ENCODE measurements at regions of chr1 and their contacts with region 1.

Region 1: DNA sequence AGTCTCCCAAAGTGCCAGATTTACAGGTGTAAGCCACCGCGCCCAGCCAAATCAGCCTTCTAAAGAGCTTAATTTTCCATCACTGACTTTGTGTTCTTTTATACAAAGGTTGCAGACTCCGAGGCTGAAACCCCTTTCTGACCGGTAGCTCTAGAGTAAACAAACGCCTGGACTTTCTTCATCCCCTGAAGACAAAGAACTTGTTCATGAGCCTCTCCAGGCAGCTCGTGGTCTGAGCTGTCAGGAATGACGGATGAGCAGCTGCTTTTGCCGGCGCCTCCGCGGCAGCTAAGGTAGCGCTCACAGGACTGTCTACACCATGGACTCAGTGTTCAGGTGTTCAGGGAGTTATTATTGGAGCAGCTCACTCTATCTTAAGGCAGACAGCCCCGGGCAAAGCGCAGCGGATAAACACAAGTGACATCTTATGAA is 128.5 kb upstream of the ERRFI1 start:
- DNase-seq: no peak
- ATAC-seq: no peak
- H3K4me3 Mint-ChIP-seq: peak overlapping the region in 4 of 10 donors; percentile 22 to 43 (median 34)
- H3K27ac Mint-ChIP-seq: peak overlapping the region in 5 of 10 donors; percentile 15 to 79 (median 52)
- H3K4me1 Mint-ChIP-seq: peaks cover 31 to 55% (median 48%) of the 10 kb centered on the region in 4 donors
- H3K27me3 Mint-ChIP-seq: peaks cover 0 to 26% (median 7%) of the 10 kb centered on the region in 5 donors

Region 2: DNA sequence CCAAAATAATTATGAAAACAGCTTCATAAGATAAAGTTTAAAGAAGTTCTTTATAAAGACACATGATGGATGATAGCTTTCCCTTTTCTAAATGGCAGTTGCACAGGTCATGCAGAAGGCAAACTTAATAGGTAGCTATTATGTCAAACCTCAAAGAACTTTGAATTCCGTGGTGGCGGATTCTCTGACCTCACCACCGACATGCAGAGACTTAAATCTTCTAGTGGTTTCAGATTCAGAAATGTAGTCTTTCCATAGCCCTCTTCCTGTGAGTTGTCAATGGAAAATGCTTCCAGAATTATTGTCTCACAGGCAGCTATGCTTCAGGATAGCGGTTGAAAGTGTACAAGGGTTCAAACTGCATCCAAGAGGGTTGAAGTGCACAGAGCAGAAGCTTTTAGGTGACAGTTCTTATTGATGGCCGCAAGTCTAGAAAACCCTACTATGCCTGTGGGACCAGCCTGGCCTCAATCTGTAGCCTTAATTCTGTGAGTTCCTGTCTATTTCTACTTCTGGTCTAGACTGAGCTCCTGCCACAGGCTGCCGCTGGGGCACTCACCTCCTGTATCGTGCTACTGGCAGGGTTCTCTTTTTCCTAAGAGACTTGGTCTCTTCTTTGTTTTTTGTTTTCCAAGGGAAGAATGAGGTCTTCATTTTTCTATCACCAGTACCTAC is 11.5 kb before region 1 on chr1:
- POLR2A ChIA-PET with region 1: no interaction called
- DNase-seq: no peak
- ATAC-seq: no peak
- H3K4me3 Mint-ChIP-seq: no peak overlapping the region
- H3K27ac Mint-ChIP-seq: no peak overlapping the region
- H3K4me1 Mint-ChIP-seq: peaks cover 15 to 37% (median 32%) of the 10 kb centered on the region in 4 donors
- H3K27me3 Mint-ChIP-seq: peaks cover 9 to 37% (median 18%) of the 10 kb centered on the region in 5 donors

Region 3: GRCh38 chr1:8169364-8170058 is 14.9 kb after region 1 on chr1:
- POLR2A ChIA-PET with region 1: interaction called, 89 read pairs
- DNase-seq: peak in 9 of 10 donors; percentile 11 to 80 (median 63)
- ATAC-seq: peak; percentile 97 to 99
- H3K4me3 Mint-ChIP-seq: peak overlapping the region in 9 of 10 donors; percentile 52 to 83 (median 73)
- H3K27ac Mint-ChIP-seq: peak overlapping the region; percentile 85 to 99 (median 96)
- H3K4me1 Mint-ChIP-seq: peaks cover 16 to 52% (median 34%) of the 10 kb centered on the region in 4 donors
- H3K27me3 Mint-ChIP-seq: no peaks in the 10 kb centered on the region